MCF 10A (cell line): ENCODE measurements at regions of chr4 and their contacts with region 1.

Region 1: GRCh38 chr4:139665690-139666529 is at the start of gene MGST2:
- DNase-seq: peak; percentile 65
- H3K4me3 Mint-ChIP-seq: peak within 1 kb of the TSS; percentile 81
- H3K27ac Mint-ChIP-seq: peak within 1 kb of the TSS; percentile 93
- H3K4me1 Mint-ChIP-seq: peaks cover 23% of the 10 kb centered on the region
- H3K27me3 Mint-ChIP-seq: no peaks in the 10 kb centered on the region
- CTCF ChIP-seq: no peak
- total RNA-seq, gene MGST2: 27.5 and 41.5 TPM in 2 replicates

Region 2: GRCh38 chr4:139392797-139393196 is 273.1 kb before region 1 on chr4:
- CTCF ChIA-PET with region 1: no interaction called
- POLR2A ChIA-PET with region 1: no interaction called
- intact Hi-C with region 1: no loop called
- DNase-seq: no peak
- H3K4me3 Mint-ChIP-seq: no peak overlapping the region
- H3K27ac Mint-ChIP-seq: no peak overlapping the region
- H3K4me1 Mint-ChIP-seq: no peaks in the 10 kb centered on the region
- H3K27me3 Mint-ChIP-seq: no peaks in the 10 kb centered on the region
- CTCF ChIP-seq: no peak

Region 3: GRCh38 chr4:139501927-139502899 is 163.7 kb before region 1 on chr4:
- CTCF ChIA-PET with region 1: no interaction called
- POLR2A ChIA-PET with region 1: no interaction called
- intact Hi-C with region 1: no loop called
- DNase-seq: no peak
- H3K4me3 Mint-ChIP-seq: no peak overlapping the region
- H3K27ac Mint-ChIP-seq: no peak overlapping the region
- H3K4me1 Mint-ChIP-seq: no peaks in the 10 kb centered on the region
- H3K27me3 Mint-ChIP-seq: no peaks in the 10 kb centered on the region
- CTCF ChIP-seq: no peak

Region 4: DNA sequence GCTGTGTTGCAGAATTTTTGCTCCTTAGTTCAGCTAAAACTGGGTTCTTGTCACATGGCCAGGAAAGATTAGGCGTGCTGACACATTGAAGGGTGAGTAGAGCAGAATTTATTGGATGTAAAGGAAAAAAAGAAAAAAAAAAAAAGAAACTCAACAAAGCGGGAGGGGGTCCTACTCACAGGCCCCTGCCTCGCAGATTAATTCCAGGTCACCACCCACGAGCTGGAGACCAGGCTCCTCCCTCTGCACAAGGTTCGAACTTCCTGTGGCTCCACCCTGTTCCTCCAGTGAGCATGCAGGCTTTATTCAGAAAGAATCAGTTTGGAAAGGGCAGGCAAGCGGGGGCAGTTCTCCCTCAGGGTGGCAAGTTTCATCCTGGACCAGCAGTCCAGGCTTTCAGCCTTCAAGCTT is 16.8 kb after region 1 on chr4:
- CTCF ChIA-PET with region 1: interaction called, 3 read pairs
- POLR2A ChIA-PET with region 1: interaction called, 17 read pairs
- intact Hi-C with region 1: no loop called
- DNase-seq: no peak
- H3K4me3 Mint-ChIP-seq: peak overlapping the region; percentile 22
- H3K27ac Mint-ChIP-seq: peak overlapping the region; percentile 29
- H3K4me1 Mint-ChIP-seq: peaks cover 23% of the 10 kb centered on the region
- H3K27me3 Mint-ChIP-seq: no peaks in the 10 kb centered on the region
- CTCF ChIP-seq: no peak

Region 5: DNA sequence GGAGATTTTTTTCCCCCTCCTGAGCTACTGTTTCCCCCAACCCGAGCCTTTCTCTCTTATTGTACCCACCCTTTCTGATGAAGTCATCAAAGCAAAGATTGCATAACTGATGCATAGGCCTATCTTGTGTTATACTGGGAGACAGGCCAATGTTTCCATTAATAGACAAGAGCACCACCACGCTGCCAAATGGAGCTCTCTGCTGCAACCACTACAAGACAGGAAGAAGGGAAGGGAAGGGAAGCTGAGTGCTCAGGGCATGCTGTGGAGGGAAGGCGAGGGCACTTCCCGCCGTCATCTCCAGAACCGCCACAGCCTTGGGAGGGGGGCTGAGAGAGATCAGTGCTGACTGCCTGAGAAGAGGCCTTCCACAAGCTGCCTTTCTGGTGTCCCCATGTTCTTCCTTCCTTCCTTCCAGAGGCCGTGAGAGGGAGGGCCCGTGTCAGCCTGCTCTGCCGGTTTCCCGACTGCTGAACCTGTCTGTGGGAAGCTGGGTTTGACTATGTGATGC is 74.7 kb after region 1 on chr4:
- CTCF ChIA-PET with region 1: interaction called, 5 read pairs
- POLR2A ChIA-PET with region 1: interaction called, 12 read pairs
- intact Hi-C with region 1: no loop called
- DNase-seq: peak; percentile 93
- H3K4me3 Mint-ChIP-seq: no peak overlapping the region
- H3K27ac Mint-ChIP-seq: no peak overlapping the region
- H3K4me1 Mint-ChIP-seq: peaks cover 7% of the 10 kb centered on the region
- H3K27me3 Mint-ChIP-seq: no peaks in the 10 kb centered on the region
- CTCF ChIP-seq: peak; percentile 21

Region 6: GRCh38 chr4:139774759-139775487 is 109.0 kb after region 1 on chr4:
- CTCF ChIA-PET with region 1: no interaction called
- POLR2A ChIA-PET with region 1: no interaction called
- intact Hi-C with region 1: no loop called
- DNase-seq: no peak
- H3K4me3 Mint-ChIP-seq: no peak overlapping the region
- H3K27ac Mint-ChIP-seq: no peak overlapping the region
- H3K4me1 Mint-ChIP-seq: no peaks in the 10 kb centered on the region
- H3K27me3 Mint-ChIP-seq: no peaks in the 10 kb centered on the region
- CTCF ChIP-seq: no peak

Region 7: DNA sequence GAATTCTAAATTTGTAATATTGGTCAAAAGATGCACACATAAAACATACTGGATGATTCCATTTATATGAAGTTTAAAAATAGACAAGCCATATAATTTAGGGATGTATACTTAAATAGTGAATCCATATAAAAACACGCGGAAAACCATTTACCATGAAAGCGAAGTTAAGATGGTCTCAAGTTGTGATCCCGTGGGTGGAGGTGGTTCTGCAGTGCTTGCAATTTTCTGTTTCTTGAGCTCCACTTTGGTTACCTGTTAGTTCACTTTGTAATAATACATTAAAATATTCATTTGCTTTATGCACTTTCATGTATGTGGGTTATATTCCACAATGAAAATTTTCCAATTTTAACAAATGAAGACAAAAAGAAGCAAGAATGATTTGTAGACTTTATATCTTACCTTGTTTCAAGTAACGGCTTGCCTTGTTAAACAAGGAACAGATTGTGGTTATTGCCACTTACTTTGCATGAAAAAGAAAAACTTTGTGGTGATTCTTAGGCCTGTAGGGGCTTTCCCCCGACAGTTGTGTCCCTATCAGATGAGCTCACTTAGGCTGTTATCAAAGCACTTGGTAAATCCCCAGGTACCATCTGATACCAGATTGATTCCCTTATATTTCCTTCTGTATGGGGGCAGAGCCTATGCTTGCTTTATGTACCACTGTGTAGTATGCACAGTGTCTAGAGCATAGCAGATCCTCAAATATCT is 890.6 kb after region 1 on chr4:
- CTCF ChIA-PET with region 1: no interaction called
- POLR2A ChIA-PET with region 1: no interaction called
- intact Hi-C with region 1: no loop called
- DNase-seq: no peak
- H3K4me3 Mint-ChIP-seq: no peak overlapping the region
- H3K27ac Mint-ChIP-seq: no peak overlapping the region
- H3K4me1 Mint-ChIP-seq: no peaks in the 10 kb centered on the region
- H3K27me3 Mint-ChIP-seq: no peaks in the 10 kb centered on the region
- CTCF ChIP-seq: no peak